ENCODE measurements at regions of chr3 and their contacts with region 1.

Region 1: GRCh38 chr3:141487521-141488252 is 860 bp downstream of the RASA2 start:
- DNase-seq: peak; percentile 79
- ATAC-seq: peak; percentile 69

Region 2: DNA sequence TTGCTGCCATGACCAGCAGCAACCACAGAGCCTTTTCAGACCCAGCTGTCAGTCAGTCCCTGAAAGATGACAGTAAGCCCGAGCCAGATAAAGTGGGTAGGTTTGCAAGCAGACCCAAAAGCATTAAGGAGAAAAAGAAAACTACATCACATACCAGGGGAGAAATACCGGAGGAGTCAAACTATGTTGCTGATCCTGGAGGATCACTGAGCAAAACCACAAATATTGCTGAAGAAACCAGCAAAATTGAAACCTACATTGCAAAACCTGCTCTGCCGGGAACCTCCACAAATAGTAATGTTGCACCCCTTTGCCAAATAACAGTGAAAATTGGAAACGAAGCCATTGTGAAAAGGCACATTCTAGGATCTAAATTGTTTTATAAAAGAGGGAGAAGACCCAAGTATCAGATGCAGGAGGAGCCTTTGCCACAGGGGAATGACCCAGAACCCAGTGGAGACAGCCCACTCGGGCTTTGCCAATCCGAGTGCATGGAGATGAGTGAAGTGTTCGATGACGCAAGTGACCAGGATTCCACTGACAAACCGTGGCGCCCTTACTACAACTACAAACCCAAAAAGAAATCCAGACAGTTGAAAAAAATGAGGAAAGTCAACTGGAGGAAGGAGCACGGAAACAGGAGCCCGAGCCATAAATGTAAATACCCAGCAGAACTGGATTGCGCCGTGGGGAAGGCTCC is 43.0 kb before region 1 on chr3:
- intact Hi-C with region 1: loop called (anchors 1 kb)
- DNase-seq: no peak
- ATAC-seq: no peak

Measured in sciatic nerve (tissue), 2 donors.